Astrocyte of the cerebellum (primary cell): ENCODE measurements at regions of chr6 and their contacts with region 1.

Region 1: DNA sequence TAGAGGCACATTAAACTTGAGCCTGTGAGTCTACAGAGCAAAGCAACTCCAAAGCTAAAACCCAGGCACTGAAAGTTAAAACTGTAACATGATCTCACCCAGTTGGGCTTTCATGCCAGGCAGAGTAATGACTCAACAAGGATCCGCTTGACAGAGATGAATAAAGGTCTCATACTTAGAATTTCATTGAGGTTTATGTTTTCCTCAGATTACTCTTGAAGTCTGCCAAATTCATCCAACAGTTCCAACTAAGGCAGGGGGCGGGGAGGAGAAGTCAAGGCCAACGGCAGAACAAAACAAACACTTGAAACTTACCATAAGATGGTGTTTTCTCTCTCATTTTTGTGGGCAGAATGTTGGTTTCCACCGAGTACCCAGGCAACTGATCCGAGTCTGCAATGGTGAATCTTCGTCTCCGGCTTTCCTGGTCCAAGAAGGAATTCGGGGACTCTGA is 54.0 kb upstream of the IPCEF1 start:
- DNase-seq: peak; percentile 98
- H3K4me3 ChIP-seq: no peak overlapping the region
- CTCF ChIP-seq: no peak

Region 2: GRCh38 chr6:154509421-154510142 is 98.9 kb after region 1 on chr6:
- in situ Hi-C with region 1: loop called (anchors 10 kb)
- DNase-seq: no peak
- H3K4me3 ChIP-seq: peak overlapping the region; percentile 97
- CTCF ChIP-seq: no peak